ENCODE measurements at regions of chr10 and their contacts with region 1.

Region 1: DNA sequence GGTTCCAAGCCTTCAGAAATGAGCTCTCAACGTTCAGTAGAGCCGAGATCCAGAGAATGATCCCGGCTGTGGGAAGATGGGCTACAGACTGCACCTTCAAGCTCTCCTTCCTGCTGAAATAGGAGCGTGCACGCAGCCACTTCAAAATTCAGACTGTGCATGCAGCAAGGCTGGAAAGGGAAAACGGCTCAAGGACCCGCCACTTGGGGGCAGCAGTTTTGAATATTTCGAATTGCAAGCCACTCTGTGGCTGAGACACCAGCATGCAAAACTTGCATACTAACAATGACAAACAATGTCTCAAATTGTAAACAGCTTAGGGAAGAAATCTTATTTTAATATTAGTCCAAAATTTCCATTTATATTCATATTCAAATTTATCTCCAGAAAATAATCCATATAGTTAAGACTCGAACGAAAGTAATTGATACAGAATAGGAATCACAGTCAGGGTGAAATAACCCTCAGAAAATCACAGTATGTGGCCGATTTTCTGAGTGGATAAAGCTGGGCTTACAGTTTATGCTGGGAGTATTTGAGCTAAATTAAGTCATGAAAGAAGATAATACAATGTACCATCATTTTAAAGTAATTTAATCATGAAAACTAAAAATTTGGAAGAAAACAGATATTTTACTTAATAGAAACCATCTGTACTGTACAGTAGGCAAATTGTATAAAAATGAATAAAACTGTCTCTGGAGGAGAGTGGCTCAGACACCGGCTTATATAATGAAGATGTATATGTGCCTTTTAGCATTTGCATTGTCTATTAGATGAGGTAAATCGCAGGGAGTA is 137.9 kb upstream of the MKI67 start:
- DNase-seq: no peak
- ATAC-seq: no peak
- H3K4me3 Mint-ChIP-seq: no peak overlapping the region
- H3K27ac Mint-ChIP-seq: no peak overlapping the region
- H3K4me1 Mint-ChIP-seq: no peaks in the 10 kb centered on the region
- H3K27me3 Mint-ChIP-seq: peaks cover 49% of the 10 kb centered on the region
- CTCF ChIP-seq: no peak

Region 2: DNA sequence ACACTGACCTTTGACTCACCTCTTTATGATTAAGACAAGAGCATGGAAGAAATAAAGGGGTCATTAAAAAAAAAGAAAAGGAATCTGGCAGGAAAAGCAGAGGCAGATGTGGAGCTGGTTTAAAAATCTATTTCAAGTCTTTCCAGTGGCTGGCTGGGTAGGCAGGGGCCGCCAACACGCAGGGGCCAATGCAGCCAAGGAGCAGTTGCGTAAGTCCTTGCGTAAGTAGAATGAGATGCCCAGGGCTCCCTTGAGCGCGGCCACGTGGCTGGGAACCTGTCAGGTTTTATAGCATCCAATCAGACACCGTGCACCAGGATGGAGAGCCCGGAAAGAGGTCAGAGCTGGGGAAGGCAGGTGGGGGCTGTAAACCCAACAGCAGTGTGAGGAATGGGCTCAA is 943.9 kb before region 1 on chr10:
- CTCF ChIA-PET with region 1: no interaction called
- POLR2A ChIA-PET with region 1: no interaction called
- intact Hi-C with region 1: no loop called
- DNase-seq: no peak
- ATAC-seq: no peak
- H3K4me3 Mint-ChIP-seq: no peak overlapping the region
- H3K27ac Mint-ChIP-seq: no peak overlapping the region
- H3K4me1 Mint-ChIP-seq: no peaks in the 10 kb centered on the region
- H3K27me3 Mint-ChIP-seq: no peaks in the 10 kb centered on the region
- CTCF ChIP-seq: no peak

Region 3: DNA sequence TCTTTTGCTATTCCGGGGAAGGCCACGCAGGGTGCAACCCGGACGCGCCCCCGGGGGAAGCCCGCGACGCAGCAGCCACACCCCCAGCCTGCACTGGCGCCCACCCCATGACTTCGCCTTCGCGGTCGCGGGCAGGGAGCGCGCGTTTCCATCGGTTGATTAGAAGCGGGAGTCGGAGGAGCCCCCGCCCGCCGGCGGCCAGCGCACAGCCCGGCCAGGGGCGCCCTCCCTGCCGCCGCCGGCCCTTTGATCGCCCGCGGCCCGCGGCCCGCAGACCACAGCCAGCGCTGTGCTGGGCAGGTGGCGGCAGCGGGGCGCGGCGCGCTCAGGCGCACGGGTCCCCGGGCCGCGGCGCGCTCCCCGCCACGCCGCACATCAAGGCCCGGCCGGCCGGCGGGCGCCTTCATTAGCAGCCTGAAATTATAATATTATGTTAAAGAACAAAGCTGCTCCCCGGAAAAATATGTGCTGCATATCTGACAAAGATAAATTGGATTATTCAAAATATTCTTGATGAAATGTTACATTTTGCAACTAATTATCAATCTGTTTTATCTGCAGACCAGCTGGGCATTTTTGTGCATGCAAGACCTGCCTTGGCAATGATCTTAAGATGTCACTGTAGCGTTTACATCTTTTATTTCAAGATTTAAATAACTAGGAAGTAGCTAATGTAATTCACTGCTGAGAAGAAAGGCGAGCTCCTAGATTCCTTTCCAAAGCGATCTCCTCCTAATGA is 22.8 kb after region 1 on chr10:
- CTCF ChIA-PET with region 1: no interaction called
- POLR2A ChIA-PET with region 1: no interaction called
- intact Hi-C with region 1: no loop called
- DNase-seq: no peak
- ATAC-seq: no peak
- H3K4me3 Mint-ChIP-seq: no peak overlapping the region
- H3K27ac Mint-ChIP-seq: no peak overlapping the region
- H3K4me1 Mint-ChIP-seq: no peaks in the 10 kb centered on the region
- H3K27me3 Mint-ChIP-seq: peaks cover 35% of the 10 kb centered on the region
- CTCF ChIP-seq: no peak

Region 4: GRCh38 chr10:128776673-128777252 is 512.7 kb after region 1 on chr10:
- CTCF ChIA-PET with region 1: no interaction called
- POLR2A ChIA-PET with region 1: no interaction called
- intact Hi-C with region 1: no loop called
- DNase-seq: no peak
- ATAC-seq: no peak
- H3K4me3 Mint-ChIP-seq: no peak overlapping the region
- H3K27ac Mint-ChIP-seq: no peak overlapping the region
- H3K4me1 Mint-ChIP-seq: no peaks in the 10 kb centered on the region
- H3K27me3 Mint-ChIP-seq: no peaks in the 10 kb centered on the region
- CTCF ChIP-seq: no peak

Region 5: DNA sequence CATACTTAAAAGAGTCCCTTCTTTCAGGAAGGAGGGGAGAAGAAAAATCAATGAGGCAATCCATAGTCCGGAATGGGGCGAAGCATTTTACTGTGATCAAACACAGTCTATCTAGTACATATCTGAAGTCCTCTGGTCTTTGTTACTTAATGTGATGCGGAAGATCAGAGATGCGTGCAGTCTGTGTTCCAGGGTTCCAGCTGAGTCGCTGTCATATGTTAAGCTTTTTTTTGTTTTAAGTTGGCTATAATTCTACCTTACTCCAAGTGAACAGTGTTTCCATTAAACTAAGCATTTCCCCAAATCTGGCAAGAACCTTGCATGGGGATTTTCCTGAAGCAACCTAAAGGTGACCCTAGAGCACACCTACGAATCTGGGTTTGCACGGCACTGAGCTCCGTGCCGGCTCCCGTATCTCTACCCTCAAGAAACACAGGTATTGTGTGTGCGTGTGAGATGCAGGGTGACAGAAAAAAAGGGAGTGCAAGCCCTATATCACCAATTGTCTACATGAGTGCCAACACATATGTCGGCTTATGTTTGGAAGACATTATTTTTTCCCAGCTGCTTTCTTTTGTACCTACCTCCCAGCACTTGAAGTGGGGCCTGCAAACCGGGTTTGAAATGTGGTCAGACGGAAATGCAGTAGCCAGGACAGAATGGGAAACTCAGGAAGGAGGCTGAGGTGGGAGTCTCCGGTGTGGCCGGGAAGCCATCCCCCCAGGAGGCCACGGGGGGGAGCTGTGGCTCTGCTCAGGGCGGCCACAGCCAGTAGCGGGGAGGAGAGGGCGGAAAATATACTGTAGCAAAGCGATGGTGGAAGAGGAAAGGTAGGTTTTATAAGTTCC is 767.1 kb after region 1 on chr10:
- CTCF ChIA-PET with region 1: no interaction called
- POLR2A ChIA-PET with region 1: no interaction called
- intact Hi-C with region 1: loop called (anchors 5 kb)
- DNase-seq: no peak
- ATAC-seq: no peak
- H3K4me3 Mint-ChIP-seq: no peak overlapping the region
- H3K27ac Mint-ChIP-seq: no peak overlapping the region
- H3K4me1 Mint-ChIP-seq: peaks cover 9% of the 10 kb centered on the region
- H3K27me3 Mint-ChIP-seq: peaks cover 30% of the 10 kb centered on the region
- CTCF ChIP-seq: no peak

Region 6: DNA sequence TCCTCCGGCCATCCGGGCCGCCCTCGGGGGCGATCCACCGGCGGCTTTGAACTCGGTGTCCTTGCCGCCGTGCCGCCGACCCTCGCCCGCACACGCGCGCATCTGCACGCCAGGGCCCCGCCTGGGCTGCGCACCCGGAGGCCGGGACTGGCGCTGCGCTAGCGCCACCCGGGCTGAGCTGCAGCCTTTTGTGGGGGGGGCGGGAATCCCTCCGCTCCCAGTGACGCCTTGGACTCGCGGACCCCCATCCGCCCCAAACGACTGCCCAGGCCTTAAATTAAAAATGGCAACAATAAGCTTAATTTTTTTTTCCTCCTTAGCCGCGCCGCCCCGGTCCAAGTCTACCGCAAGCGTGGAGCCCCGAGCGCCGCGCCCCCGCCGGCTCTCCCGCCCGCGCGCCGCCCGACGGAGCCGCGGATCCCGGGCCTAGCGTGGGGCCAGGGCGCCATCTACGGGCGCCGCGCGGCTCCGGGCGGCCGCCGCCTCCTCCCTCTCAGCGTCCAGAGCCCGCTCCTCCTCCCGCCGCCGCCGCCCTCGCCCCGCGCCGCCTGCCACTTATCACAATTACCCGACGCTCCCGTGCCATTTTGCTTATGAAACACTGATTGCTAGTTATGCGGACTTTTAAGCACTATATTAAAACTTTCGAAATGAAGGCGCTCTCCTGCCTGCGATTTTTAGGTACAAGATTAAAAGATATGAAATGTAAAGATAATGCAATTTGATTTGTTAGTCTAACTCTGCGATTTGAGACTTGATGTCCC is 1707.5 kb after region 1 on chr10:
- CTCF ChIA-PET with region 1: no interaction called
- POLR2A ChIA-PET with region 1: no interaction called
- intact Hi-C with region 1: loop called (anchors 5 kb)
- DNase-seq: no peak
- ATAC-seq: peak; percentile 58
- H3K4me3 Mint-ChIP-seq: peak overlapping the region; percentile 11
- H3K27ac Mint-ChIP-seq: peak overlapping the region; percentile 47
- H3K4me1 Mint-ChIP-seq: peaks cover 9% of the 10 kb centered on the region
- H3K27me3 Mint-ChIP-seq: peaks cover 52% of the 10 kb centered on the region
- CTCF ChIP-seq: no peak

Measured in activated B cell treated with CpG ODN at 0.5 μM for 24 hours (primary cell).